HEK293T (cell line): ENCODE measurements at regions of chr9 and their contacts with region 1.

Region 1: GRCh38 chr9:79768194-79768593 is 196.4 kb downstream of the TLE4 start:
- DNase-seq: peak; percentile 80

Region 2: GRCh38 chr9:79757881-79758669 is 10.1 kb before region 1 on chr9:
- CTCF ChIA-PET with region 1: interaction called, 10 read pairs
- POLR2A ChIA-PET with region 1: interaction called, 4 read pairs
- DNase-seq: no peak

Region 3: GRCh38 chr9:79809931-79810330 is 41.7 kb after region 1 on chr9:
- CTCF ChIA-PET with region 1: no interaction called
- POLR2A ChIA-PET with region 1: no interaction called
- DNase-seq: no peak